Stomach (tissue), 19 donors: ENCODE measurements at regions of chr4 and their contacts with region 1.

Region 1: DNA sequence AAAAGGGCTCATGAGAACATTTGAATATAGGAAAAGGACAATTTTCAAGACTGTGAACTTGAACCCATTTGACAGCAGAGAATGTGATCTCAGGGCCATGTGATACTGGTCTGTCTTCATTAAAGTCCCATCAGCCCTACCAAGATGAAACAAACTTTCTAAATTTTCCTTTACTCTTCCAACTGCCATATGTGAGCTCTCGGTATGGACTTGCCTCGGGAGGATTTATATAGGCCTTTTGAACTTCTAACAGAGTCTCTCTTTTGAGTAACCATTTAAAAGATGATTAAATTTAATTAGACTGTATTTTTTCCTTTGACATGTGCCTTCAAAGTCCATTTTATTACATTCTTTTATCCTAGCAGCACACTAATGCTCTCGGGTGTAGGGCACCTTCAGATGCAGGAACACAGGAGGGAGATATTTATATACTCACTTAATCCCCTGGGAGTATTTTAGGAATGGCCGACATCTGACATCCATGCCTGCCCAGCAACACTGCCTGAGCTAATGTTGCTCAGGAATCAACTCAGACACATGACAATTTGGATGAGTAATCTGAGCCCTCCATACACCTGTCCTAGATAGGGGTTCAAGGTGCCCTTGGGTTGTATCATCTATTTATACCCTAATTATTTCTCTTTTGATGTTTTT is 155.0 kb downstream of the SLC7A11 start:
- DNase-seq: no peak
- H3K4me3 ChIP-seq: no peak overlapping the region
- H3K27ac ChIP-seq: no peak overlapping the region
- H3K4me1 ChIP-seq: peaks cover 0 to 6% (median 2%) of the 10 kb centered on the region in 4 donors
- H3K27me3 ChIP-seq: no peaks in the 10 kb centered on the region
- CTCF ChIP-seq: no peak
- EP300 ChIP-seq: no peak
- POLR2A ChIP-seq: no peak

Region 2: DNA sequence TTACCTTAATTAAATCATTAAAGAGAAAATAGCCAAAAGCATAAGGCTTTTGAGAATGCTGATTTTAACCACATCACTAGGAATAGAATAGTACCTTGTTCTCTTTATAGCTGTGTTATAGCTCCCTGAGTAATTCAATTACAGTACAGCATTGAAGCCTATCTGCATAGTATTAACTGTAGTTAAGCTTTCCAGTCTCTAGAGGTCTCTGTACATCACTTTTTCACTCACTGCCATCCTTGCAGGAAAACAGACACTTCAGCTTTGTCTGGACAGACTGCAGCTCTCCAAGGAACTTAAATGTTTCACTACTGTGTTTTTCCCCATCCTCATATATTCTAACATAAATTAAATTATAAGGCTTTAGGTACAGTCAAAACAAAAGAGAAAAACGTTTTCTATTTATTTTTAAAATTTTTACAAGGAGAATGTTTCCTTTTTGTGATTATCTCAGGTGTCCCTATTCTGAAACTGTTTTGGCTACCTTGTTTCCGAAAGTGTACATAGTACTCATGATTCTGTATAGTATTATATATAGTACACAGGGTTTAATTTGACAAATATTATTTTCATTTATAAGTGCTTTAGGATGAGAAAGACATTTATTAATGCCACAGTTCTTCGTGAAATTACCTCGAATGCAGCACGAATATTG is 962.8 kb before region 1 on chr4:
- intact Hi-C with region 1: loop called (anchors 10 kb)
- DNase-seq: peak in 1 of 2 donors; percentile 74
- H3K4me3 ChIP-seq: peak overlapping the region; percentile 10 to 28 (median 18)
- H3K27ac ChIP-seq: no peak overlapping the region
- H3K4me1 ChIP-seq: no peaks in the 10 kb centered on the region
- H3K27me3 ChIP-seq: no peaks in the 10 kb centered on the region
- CTCF ChIP-seq: peak in 2 of 7 experiments; percentile 32
- EP300 ChIP-seq: no peak
- POLR2A ChIP-seq: no peak

Region 3: DNA sequence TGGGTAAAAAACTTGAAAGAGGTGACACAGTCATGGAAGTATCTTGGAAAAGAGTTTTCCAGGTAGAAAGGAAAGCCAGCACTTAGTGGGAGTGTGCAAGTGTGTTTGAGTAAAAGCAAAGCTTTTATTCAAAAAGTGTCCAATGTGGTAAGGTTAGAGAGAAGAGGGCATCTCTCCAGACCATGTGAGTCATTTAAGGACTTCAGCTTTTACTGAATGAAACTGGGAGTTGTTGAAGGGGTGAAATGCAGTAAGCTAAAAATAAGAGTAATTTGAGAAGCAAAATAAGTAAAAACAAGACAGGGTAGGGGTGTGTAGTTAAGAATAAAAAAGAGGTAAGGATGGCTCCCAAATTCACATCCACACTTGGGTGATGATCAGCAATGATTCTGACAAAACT is 83.9 kb before region 1 on chr4:
- intact Hi-C with region 1: no loop called
- DNase-seq: no peak
- H3K4me3 ChIP-seq: no peak overlapping the region
- H3K27ac ChIP-seq: no peak overlapping the region
- H3K4me1 ChIP-seq: no peaks in the 10 kb centered on the region
- H3K27me3 ChIP-seq: no peaks in the 10 kb centered on the region
- CTCF ChIP-seq: no peak
- EP300 ChIP-seq: no peak
- POLR2A ChIP-seq: no peak